H1 (cell line): ENCODE measurements at regions of chr7 and their contacts with region 1.

Region 1: DNA sequence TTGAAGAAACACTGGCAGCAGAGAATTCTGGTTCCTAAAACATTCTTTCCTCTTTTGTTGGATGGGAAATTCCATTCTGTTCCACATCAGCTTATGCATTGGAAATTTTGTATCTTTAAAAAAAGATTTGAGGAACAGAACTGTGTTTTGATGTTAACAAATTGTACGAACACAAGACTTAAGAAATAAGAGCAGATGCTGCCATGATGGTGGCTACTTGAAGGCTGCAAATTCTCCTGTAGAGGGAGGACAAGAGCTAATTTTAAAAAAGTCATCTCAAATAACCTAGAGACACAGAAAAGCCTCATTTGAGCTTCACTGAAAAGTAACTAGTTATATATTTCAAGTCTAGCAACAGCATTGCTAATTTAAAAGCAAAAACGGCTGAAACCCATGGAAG is 29.8 kb downstream of the NDUFB2 start:
- DNase-seq: no peak
- H3K4me3 ChIP-seq: no peak overlapping the region
- H3K27ac ChIP-seq: no peak overlapping the region
- H3K4me1 ChIP-seq: no peaks in the 10 kb centered on the region
- H3K27me3 ChIP-seq: no peaks in the 10 kb centered on the region
- CTCF ChIP-seq: peak in 2 of 3 experiments; percentile 21 to 51; a peak in 1 of 4 replicates
- EP300 ChIP-seq: no peak
- POLR2A ChIP-seq: no peak
- RAD21 ChIP-seq: peak; percentile 50 to 60

Region 2: GRCh38 chr7:140638173-140638791 is 88.0 kb before region 1 on chr7:
- CTCF ChIA-PET with region 1: no interaction called
- POLR2A ChIA-PET with region 1: no interaction called
- DNase-seq: peak in 1 of 2 experiments; percentile 54
- H3K4me3 ChIP-seq: no peak overlapping the region
- H3K27ac ChIP-seq: no peak overlapping the region
- H3K4me1 ChIP-seq: peaks cover 12 to 27% (median 19%) of the 10 kb centered on the region in 4 experiments
- H3K27me3 ChIP-seq: peaks cover 0 to 28% (median 14%) of the 10 kb centered on the region in 4 experiments; a peak in 5 of 7 replicates
- CTCF ChIP-seq: peak; percentile 28 to 66 (median 57); a peak in 3 of 4 replicates
- EP300 ChIP-seq: no peak
- POLR2A ChIP-seq: no peak
- RAD21 ChIP-seq: peak; percentile 52 to 59

Region 3: DNA sequence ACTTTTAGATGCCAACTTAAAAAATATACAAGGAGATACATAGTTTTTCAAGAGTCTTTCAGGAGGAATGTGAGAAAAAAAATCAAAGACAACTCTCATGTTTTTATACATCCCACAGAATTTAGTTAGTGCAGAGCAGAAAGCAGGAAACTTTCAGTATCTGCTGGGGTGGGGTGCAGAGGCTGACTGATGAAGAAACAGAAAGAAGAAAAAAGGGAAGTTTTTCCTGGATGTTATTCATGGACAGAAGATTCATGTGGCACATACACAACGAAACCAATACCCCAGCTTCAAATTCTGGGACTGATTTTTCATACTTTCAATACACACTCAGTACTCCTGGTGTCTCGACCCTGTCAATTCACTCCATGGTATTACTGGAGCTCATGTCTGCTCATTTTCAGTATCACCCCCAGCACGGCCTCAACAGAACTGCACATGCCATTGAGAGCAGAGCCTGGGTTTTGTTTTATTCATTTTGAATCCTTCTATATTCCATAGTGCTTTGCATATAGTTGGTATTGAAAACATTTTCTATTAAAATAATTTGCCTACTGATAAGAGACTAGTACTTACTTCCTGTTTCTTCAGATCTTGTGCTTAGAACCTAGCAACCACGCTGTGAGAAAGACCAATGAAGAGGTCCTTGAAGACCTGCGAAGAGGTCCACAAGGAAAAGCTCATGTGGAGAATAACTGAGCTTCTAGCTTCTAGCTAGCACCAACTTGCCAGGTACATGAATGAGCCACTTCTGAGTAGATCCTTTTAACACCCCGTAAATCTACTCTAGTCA is 19.2 kb after region 1 on chr7:
- CTCF ChIA-PET with region 1: interaction called, 11 read pairs
- POLR2A ChIA-PET with region 1: no interaction called
- DNase-seq: no peak
- H3K4me3 ChIP-seq: no peak overlapping the region
- H3K27ac ChIP-seq: no peak overlapping the region
- H3K4me1 ChIP-seq: no peaks in the 10 kb centered on the region
- H3K27me3 ChIP-seq: no peaks in the 10 kb centered on the region
- CTCF ChIP-seq: no peak
- EP300 ChIP-seq: no peak
- POLR2A ChIP-seq: no peak
- RAD21 ChIP-seq: no peak